ENCODE measurements at regions of chr2 and their contacts with region 1.

Region 1: DNA sequence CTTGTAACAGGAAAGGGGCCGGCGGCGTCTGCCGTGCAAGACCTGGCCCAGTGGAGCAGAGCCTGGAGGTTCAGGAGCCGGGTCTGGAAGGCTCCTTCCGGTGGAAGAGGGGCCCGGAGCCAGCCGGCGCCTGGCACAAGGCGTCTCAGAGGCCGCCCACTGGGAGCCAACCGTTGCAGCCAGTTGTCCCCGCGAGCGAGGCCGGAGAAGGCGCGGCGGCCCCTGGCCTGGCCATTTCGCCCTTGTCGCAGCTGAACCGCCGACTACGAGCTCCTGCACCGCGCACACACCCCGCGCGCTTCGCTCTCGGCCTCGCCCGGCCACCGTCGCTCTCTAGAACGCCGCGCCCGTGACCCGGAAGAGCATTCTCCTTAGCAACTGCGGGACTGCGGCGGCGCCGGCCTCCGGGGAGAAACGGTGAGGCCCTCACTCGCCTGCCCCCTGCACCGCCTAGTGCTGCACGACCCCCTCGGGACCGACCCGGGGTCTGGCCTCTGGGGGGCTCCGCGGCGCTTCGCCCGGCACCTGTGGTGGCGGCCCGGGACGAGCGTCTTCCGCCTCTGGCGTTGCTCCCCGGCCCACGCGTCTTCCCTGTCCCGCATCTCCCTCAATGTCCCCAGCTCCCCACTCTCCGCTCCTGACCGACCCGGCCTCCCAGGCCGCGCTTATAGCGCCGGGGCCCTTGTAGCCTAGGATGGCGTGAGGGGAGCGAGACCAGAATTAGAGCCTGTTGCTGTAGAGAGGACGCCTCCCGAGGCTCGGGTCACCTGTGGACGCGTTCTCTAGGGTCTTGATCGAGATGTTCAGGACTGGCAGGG is at the start of gene DIS3L2:
- DNase-seq: peak; percentile 66 to 83 (median 81)
- ATAC-seq: peak; percentile 96
- H3K4me3 ChIP-seq: peak within 1 kb of the TSS; percentile 79
- H3K4me3 Mint-ChIP-seq: peak within 1 kb of the TSS; percentile 83 to 96 (median 91)
- H3K27ac ChIP-seq: peak within 1 kb of the TSS; percentile 77
- H3K27ac Mint-ChIP-seq: peak within 1 kb of the TSS; percentile 78 to 96 (median 94)
- H3K4me1 ChIP-seq: peaks cover 14 to 17% of the 10 kb centered on the region in 2 donors
- H3K4me1 Mint-ChIP-seq: peaks cover 22 to 52% (median 45%) of the 10 kb centered on the region in 7 donors
- H3K27me3 ChIP-seq: no peaks in the 10 kb centered on the region
- H3K27me3 Mint-ChIP-seq: peaks cover 0 to 3% (median under 1%) of the 10 kb centered on the region in 5 donors
- total RNA-seq, gene DIS3L2: 47.1 to 78.4 (median 66.4) TPM

Region 2: GRCh38 chr2:233566141-233566960 is 1604.8 kb after region 1 on chr2 and contains the start of gene USP40:
- CTCF ChIA-PET with region 1: no interaction called
- POLR2A ChIA-PET with region 1: no interaction called
- intact Hi-C with region 1: loop called in 1 of 2 experiments (anchors 5 kb)
- DNase-seq: peak; percentile 27 to 60 (median 39)
- ATAC-seq: peak; percentile 86
- H3K4me3 ChIP-seq: peak within 1 kb of the TSS; percentile 75
- H3K4me3 Mint-ChIP-seq: peak within 1 kb of the TSS; percentile 92 to 97 (median 94)
- H3K27ac ChIP-seq: peak within 1 kb of the TSS; percentile 87
- H3K27ac Mint-ChIP-seq: peak within 1 kb of the TSS; percentile 70 to 97 (median 95)
- H3K4me1 ChIP-seq: no peaks in the 10 kb centered on the region
- H3K4me1 Mint-ChIP-seq: peaks cover 7 to 21% (median 14%) of the 10 kb centered on the region in 7 donors
- H3K27me3 ChIP-seq: no peaks in the 10 kb centered on the region
- H3K27me3 Mint-ChIP-seq: peaks cover 0 to 22% (median 0%) of the 10 kb centered on the region in 5 donors
- total RNA-seq, gene USP40: 14.4 to 24.3 (median 20.8) TPM

Measured in naive thymus-derived CD4-positive, alpha-beta T cell (primary cell).